K562 (cell line): ENCODE measurements at regions of chr2 and their contacts with region 1.

Region 1: DNA sequence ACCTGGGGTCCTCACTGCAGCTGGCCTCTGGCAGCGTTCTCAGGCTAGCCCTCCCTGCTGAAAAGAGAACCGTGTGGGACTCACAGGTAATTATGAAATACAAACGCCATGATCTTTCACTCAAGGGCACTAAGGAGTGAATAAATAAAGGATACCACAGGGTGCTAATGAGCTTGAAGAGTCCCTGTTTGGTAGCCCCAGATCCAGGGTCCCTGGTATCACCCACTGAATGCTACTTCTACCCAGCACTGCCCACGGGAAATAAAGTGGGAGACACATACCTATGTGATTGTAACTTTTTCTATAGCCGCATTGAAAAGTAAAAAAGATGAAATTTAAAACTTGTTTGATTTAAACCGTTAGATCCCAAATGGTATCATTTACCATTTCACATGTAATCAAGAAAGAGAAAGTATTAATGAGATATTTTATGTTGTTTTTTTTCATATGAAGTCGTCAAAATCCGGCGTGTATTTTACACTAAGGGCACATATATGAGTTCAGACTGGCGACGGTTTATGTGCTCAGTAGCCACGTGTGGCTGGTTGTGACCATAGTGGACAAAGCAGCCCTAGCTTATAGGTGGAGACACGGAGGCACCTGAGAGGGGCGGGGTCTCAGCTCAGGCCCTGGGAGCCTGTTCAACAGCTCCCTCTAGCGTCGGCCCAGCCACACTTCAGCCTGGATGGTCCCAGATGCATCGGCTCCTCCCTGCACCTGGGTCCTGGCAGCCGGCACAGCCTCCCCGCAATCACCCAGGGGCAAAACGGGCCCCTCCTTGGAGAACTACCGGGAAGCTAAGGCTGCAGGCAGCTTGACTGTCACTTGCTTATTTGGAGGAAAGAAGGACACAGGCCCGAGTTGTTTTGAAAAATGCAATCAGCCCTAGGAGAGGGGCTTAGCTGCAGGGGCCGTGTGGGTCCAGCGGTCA is 39.2 kb downstream of the ODC1 start:
- DNase-seq: peak; percentile 90 to 94 (median 93)
- ATAC-seq: peak; percentile 89
- H3K4me3 ChIP-seq: no peak overlapping the region
- H3K27ac ChIP-seq: peak overlapping the region; percentile 81
- H3K4me1 ChIP-seq: peaks cover 17 to 38% of the 10 kb centered on the region in 2 experiments; a peak in 4 of 5 replicates
- H3K27me3 ChIP-seq: no peaks in the 10 kb centered on the region
- CTCF ChIP-seq: peak; percentile 94 to 97 (median 97)
- EP300 ChIP-seq: peak; percentile 8; the same call in 1 of the 2 replicates
- POLR2A ChIP-seq: no peak
- RAD21 ChIP-seq: peak; percentile 93 to 96

Region 2: GRCh38 chr2:10141736-10142642 is 266.9 kb before region 1 on chr2:
- CTCF ChIA-PET with region 1: no interaction called
- POLR2A ChIA-PET with region 1: no interaction called
- in situ Hi-C with region 1: loop called (anchors 10 kb)
- intact Hi-C with region 1: no loop called
- DNase-seq: peak in 1 of 4 experiments; percentile 29
- ATAC-seq: peak; percentile 69
- H3K4me3 ChIP-seq: no peak overlapping the region
- H3K27ac ChIP-seq: no peak overlapping the region
- H3K4me1 ChIP-seq: peaks cover 0 to 15% of the 10 kb centered on the region in 2 experiments; a peak in 3 of 5 replicates
- H3K27me3 ChIP-seq: no peaks in the 10 kb centered on the region
- CTCF ChIP-seq: peak; percentile 22 to 47 (median 38); a peak in 3 of 6 replicates
- EP300 ChIP-seq: no peak
- POLR2A ChIP-seq: no peak
- RAD21 ChIP-seq: peak in 1 of 2 experiments; percentile 46; a peak in 2 of 4 replicates

Region 3: DNA sequence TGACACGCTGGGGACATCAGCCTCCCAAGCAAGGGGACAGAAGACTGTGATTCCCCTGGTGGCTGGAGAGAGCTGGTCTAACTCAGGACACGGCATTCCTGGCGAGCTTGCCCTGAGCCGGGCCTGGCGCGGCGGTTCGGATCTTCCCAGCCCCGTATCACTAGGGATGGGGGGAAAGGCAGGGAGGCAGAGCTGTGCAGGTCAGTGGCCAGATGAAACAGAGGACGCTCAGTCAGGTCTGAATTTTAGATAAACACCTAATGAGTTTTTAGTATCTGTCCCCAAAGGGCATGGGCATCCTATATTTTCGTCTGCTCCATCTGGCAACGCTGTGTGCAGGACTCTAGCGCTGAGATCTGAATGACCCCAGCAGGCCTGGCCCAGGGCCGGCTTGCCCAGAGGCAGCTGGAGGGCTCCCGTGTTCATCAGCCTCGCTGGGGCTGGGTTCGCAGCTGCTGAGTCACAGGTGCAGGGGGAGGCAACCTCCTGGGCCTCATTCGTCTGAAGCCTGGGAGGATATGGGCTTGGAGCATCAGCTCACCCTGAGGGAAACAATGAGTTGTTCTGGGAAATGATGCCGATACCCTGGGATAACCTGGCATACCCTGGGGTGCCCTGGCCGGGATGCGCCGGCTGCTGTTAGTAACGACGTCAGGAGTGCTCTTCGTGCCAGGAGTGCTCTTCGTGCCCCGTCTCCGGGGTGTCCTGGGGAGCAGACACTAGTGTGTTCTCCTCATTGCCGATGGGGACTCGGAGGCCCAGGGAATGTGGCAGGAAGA is 154.4 kb before region 1 on chr2:
- CTCF ChIA-PET with region 1: no interaction called
- POLR2A ChIA-PET with region 1: interaction called, 6 read pairs
- in situ Hi-C with region 1: loop called (anchors 25 kb)
- intact Hi-C with region 1: no loop called
- DNase-seq: peak; percentile 79 to 89 (median 83)
- ATAC-seq: peak; percentile 91
- H3K4me3 ChIP-seq: no peak overlapping the region
- H3K27ac ChIP-seq: peak overlapping the region; percentile 73
- H3K4me1 ChIP-seq: peaks cover 22 to 45% of the 10 kb centered on the region in 2 experiments
- H3K27me3 ChIP-seq: no peaks in the 10 kb centered on the region
- CTCF ChIP-seq: 0 out of 6 replicates have a peak, but pooled peaks of 2 of the 3 experiments have one; percentile 3 to 14
- EP300 ChIP-seq: no peak; the same call in 1 of the 2 replicates
- POLR2A ChIP-seq: no peak
- RAD21 ChIP-seq: no peak

Region 4: DNA sequence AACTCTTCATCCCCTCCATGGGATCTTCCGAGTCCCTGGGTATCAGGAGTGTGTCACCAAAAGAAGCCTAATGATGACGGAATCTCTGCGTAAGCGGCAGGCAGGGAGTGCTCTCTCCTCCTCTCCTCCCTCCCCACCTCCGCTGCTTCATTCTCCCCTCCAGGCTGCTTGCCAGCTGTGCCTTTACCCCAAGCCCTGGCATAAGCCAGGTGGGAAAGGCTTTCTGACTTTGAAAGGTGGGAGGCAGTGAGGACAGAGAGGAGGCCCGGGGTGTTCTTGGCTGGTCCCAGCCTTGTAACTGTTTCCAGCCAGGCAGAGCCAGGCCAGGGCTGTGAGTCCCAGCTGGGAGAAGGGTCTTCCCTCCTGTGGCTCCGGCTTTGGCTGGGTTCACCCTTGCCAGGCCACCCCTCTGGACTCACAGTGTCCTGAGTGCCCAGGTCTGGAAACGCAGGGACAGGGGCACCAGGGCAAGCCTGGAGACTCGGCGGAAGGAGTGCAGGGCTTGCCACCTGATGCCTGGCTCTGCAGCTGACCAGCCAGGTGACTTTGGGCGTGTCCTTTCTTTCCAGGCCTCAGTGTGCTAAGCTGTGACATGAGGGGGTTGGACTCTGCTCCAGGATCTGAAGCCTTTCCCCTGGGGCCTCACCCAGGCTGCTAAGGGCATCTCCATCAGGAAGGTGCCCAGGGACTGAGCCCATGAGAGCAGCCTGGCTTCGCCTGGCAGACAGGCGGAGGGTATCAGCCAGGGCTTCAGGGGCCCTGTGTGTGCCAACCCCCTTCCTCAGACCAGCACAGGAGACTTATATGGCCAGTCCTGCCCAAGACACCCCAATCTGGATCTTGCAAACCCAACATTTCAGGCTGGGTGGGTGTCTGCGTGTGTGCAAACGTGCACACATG is 139.0 kb before region 1 on chr2:
- CTCF ChIA-PET with region 1: interaction called, 22 read pairs
- POLR2A ChIA-PET with region 1: no interaction called
- in situ Hi-C with region 1: loop called (anchors 25 kb)
- intact Hi-C with region 1: loop called (anchors 1 kb)
- DNase-seq: no peak
- ATAC-seq: no peak
- H3K4me3 ChIP-seq: no peak overlapping the region
- H3K27ac ChIP-seq: no peak overlapping the region
- H3K4me1 ChIP-seq: peaks cover 26 to 51% of the 10 kb centered on the region in 2 experiments; a peak in 4 of 5 replicates
- H3K27me3 ChIP-seq: no peaks in the 10 kb centered on the region
- CTCF ChIP-seq: no peak
- EP300 ChIP-seq: no peak
- POLR2A ChIP-seq: no peak
- RAD21 ChIP-seq: no peak

Region 5: DNA sequence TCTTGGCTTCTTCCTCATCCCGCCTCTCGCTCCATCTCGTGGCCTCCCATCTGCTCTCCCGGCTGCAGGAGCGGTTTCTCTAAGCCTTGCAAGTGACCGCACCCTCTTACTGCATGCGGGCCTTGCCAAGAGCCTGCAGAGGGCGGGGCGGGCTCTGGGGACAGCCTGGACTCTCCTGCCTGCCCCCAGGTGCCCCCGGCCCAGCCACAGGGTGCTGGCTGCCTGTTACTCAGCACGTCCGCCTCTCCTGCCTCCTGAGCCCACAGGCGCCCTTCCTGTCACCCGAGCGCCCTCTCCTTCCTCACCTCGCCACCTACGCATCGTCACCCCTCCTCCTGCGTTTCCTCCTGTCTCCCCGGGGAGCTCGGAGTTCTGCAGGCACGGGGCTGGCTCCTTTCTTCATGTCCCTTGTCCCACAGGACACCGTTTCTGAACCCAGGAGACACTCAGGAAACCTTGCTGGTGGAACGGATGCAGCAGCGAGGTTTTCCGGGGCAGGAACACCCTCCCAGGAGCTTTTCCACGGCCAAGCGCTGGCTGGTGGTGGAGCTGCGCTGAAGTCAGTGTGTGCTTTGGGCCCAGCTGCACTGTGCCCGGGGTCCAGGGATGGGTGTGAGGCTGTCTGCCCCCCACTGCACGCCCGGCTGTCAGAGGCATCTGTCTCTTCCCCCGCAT is 77.8 kb before region 1 on chr2:
- CTCF ChIA-PET with region 1: no interaction called
- POLR2A ChIA-PET with region 1: no interaction called
- in situ Hi-C with region 1: no loop called
- intact Hi-C with region 1: loop called (anchors 2 kb)
- DNase-seq: peak; percentile 58 to 71 (median 66)
- ATAC-seq: peak; percentile 70
- H3K4me3 ChIP-seq: no peak overlapping the region
- H3K27ac ChIP-seq: peak overlapping the region; percentile 83; the same call in 2 of the 3 replicates
- H3K4me1 ChIP-seq: peaks cover 52 to 72% of the 10 kb centered on the region in 2 experiments
- H3K27me3 ChIP-seq: no peaks in the 10 kb centered on the region
- CTCF ChIP-seq: peak in 1 of 3 experiments; percentile 28; a peak in 2 of 6 replicates
- EP300 ChIP-seq: no peak
- POLR2A ChIP-seq: no peak
- RAD21 ChIP-seq: peak; percentile 15 to 24; a peak in 2 of 4 replicates